ENCODE measurements at regions of chr10 and their contacts with region 1.

Region 1: DNA sequence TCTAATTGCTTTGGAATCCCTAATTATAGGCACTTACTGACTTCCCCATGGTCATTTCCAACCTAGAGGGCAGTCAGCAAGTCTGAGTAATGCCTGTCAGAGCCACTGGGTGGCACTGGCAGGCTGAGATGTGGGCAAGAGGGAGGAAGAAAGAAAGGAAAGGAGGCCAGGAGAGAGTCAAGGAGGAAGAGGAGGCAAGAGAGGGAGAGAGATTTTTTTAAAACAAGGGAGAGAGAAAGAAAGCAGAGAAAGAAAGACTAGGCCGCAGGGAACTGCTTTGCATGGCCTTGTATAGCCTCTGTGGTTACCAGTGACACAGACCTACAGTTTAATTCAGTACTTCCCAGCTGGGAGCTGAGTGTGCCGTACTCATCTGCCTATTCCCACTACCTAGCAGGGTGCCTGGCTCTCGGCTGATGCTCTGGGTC is 210.4 kb upstream of the ADO start:
- DNase-seq: peak; percentile 10 to 70 (median 42)
- ATAC-seq: peak; percentile 65
- H3K4me3 ChIP-seq: no peak overlapping the region
- H3K4me3 Mint-ChIP-seq: no peak overlapping the region
- H3K27ac ChIP-seq: no peak overlapping the region
- H3K27ac Mint-ChIP-seq: no peak overlapping the region
- H3K4me1 ChIP-seq: no peaks in the 10 kb centered on the region
- H3K4me1 Mint-ChIP-seq: no peaks in the 10 kb centered on the region
- H3K27me3 ChIP-seq: no peaks in the 10 kb centered on the region
- H3K27me3 Mint-ChIP-seq: no peaks in the 10 kb centered on the region
- CTCF ChIP-seq: peak; percentile 97

Region 2: GRCh38 chr10:61301575-61301974 is 1292.5 kb before region 1 on chr10:
- CTCF ChIA-PET with region 1: no interaction called
- POLR2A ChIA-PET with region 1: no interaction called
- intact Hi-C with region 1: no loop called
- DNase-seq: no peak
- ATAC-seq: no peak
- H3K4me3 ChIP-seq: no peak overlapping the region
- H3K4me3 Mint-ChIP-seq: no peak overlapping the region
- H3K27ac ChIP-seq: no peak overlapping the region
- H3K27ac Mint-ChIP-seq: no peak overlapping the region
- H3K4me1 ChIP-seq: no peaks in the 10 kb centered on the region
- H3K4me1 Mint-ChIP-seq: no peaks in the 10 kb centered on the region
- H3K27me3 ChIP-seq: no peaks in the 10 kb centered on the region
- H3K27me3 Mint-ChIP-seq: no peaks in the 10 kb centered on the region
- CTCF ChIP-seq: no peak

Region 3: DNA sequence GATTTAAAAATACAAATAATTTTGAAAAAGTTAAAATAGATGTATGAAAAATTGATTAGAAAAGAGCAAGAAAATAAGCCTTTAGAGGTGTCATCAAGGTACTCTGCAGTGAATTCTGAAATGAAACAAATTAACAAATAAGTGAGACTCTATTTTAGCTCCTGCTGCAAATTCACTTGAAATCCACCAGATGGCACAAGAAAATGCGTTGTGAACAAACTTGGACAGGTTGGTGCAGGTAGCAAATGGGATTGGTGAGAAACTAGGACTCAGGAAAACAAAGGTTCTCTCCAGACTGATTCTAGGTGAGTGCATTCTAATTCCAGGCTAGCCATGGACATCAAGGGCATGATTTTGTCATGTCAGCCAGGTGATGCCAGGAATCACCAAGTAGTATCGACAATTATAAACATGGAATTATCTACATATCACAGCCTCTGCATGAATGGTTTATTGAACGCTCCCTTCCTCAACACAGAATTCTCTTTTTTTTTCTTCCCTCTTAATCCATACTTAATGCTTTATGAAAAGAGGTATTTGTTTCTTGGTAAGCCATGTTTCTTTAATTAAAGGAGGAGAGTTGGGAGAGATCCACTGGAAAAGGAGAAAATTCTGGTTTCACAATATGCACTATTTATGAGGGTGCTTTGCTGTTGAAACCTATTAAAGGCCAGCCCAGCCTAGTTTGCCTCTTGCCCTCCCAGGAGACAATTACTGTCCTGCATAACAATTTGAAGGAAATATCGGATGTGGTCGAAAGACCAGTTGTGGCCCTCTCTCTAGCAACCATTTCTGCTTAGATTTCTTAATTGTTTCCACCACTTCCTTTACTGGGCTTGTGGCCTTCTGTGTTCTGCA is 101.9 kb before region 1 on chr10:
- CTCF ChIA-PET with region 1: interaction called, 7 read pairs
- POLR2A ChIA-PET with region 1: no interaction called
- intact Hi-C with region 1: loop called (anchors 2 kb)
- DNase-seq: peak in 3 of 9 experiments; percentile 5 to 56 (median 31)
- ATAC-seq: peak; percentile 57
- H3K4me3 ChIP-seq: no peak overlapping the region
- H3K4me3 Mint-ChIP-seq: no peak overlapping the region
- H3K27ac ChIP-seq: no peak overlapping the region
- H3K27ac Mint-ChIP-seq: no peak overlapping the region
- H3K4me1 ChIP-seq: no peaks in the 10 kb centered on the region
- H3K4me1 Mint-ChIP-seq: peaks cover 5% of the 10 kb centered on the region
- H3K27me3 ChIP-seq: no peaks in the 10 kb centered on the region
- H3K27me3 Mint-ChIP-seq: peaks cover 5% of the 10 kb centered on the region
- CTCF ChIP-seq: peak; percentile 55

Region 4: DNA sequence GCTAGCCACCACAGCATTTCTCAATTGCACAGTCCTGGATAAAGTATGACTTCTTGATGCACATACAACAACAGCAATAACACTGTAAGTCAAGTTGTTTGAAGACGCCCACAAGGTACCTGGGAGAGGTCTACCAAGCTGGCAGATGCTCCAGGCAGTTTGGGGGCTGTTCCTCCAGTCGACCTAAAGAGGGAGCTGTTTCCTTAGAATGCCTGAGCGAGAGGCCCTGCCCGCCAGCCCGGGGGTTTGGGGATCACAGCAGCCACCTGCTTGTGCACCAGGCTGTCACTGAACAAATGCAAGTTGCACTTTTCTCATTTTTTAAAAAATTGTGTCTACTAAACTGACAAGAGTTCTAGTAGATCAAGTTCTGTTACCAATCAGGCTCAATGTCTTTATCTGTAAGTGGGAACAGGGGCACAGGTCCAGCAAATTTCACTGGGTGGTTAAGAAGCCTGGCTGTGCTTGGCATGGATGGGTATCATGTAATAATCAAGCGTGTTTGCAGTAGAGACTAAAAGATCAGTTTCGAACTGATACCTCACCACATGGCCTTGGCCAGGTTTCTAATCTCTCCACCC is 16.6 kb after region 1 on chr10:
- CTCF ChIA-PET with region 1: interaction called, 17 read pairs
- POLR2A ChIA-PET with region 1: no interaction called
- intact Hi-C with region 1: no loop called
- DNase-seq: peak; percentile 48 to 84 (median 70)
- ATAC-seq: peak; percentile 97
- H3K4me3 ChIP-seq: no peak overlapping the region
- H3K4me3 Mint-ChIP-seq: no peak overlapping the region
- H3K27ac ChIP-seq: no peak overlapping the region
- H3K27ac Mint-ChIP-seq: no peak overlapping the region
- H3K4me1 ChIP-seq: no peaks in the 10 kb centered on the region
- H3K4me1 Mint-ChIP-seq: peaks cover 3% of the 10 kb centered on the region
- H3K27me3 ChIP-seq: no peaks in the 10 kb centered on the region
- H3K27me3 Mint-ChIP-seq: no peaks in the 10 kb centered on the region
- CTCF ChIP-seq: peak; percentile 89

Region 5: DNA sequence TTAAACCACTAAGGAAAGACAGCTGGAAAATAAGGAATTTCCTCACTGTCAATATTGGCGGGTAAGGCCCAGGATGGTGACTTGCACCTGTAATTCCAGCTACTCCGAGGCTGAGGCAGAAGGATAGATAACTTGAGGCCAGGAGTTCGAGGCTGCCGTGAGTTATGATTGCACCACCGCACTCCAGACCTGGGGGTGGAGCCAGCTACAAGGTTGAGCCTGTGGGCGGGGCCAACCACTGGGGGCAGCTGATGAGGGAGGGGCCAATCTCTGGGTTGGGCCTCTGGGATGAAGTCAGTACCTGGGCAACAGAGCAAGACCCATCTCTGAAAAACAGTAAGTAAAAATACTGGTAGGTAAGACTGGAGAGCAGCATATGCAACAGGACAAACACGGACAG is 130.4 kb after region 1 on chr10:
- CTCF ChIA-PET with region 1: no interaction called
- POLR2A ChIA-PET with region 1: no interaction called
- intact Hi-C with region 1: no loop called
- DNase-seq: no peak
- ATAC-seq: no peak
- H3K4me3 ChIP-seq: no peak overlapping the region
- H3K4me3 Mint-ChIP-seq: no peak overlapping the region
- H3K27ac ChIP-seq: no peak overlapping the region
- H3K27ac Mint-ChIP-seq: no peak overlapping the region
- H3K4me1 ChIP-seq: no peaks in the 10 kb centered on the region
- H3K4me1 Mint-ChIP-seq: peaks cover 4% of the 10 kb centered on the region
- H3K27me3 ChIP-seq: peaks cover 0 to 2% of the 10 kb centered on the region in 2 experiments
- H3K27me3 Mint-ChIP-seq: peaks cover 5% of the 10 kb centered on the region
- CTCF ChIP-seq: no peak

Region 6: GRCh38 chr10:63083904-63084689 is 490.0 kb after region 1 on chr10:
- CTCF ChIA-PET with region 1: interaction called, 26 read pairs
- POLR2A ChIA-PET with region 1: no interaction called
- intact Hi-C with region 1: loop called (anchors 1 kb)
- DNase-seq: peak in 8 of 9 experiments; percentile 7 to 76 (median 40)
- ATAC-seq: peak; percentile 51
- H3K4me3 ChIP-seq: no peak overlapping the region
- H3K4me3 Mint-ChIP-seq: no peak overlapping the region
- H3K27ac ChIP-seq: no peak overlapping the region
- H3K27ac Mint-ChIP-seq: no peak overlapping the region
- H3K4me1 ChIP-seq: no peaks in the 10 kb centered on the region
- H3K4me1 Mint-ChIP-seq: no peaks in the 10 kb centered on the region
- H3K27me3 ChIP-seq: no peaks in the 10 kb centered on the region
- H3K27me3 Mint-ChIP-seq: peaks cover 9% of the 10 kb centered on the region
- CTCF ChIP-seq: peak; percentile 77